ENCODE measurements at regions of chr7 and their contacts with region 1.

Region 1: GRCh38 chr7:49497471-49497870 is 276.0 kb upstream of the VWC2 start:
- DNase-seq: no peak
- ATAC-seq: no peak
- H3K4me3 ChIP-seq: no peak overlapping the region
- H3K27ac ChIP-seq: no peak overlapping the region
- H3K4me1 ChIP-seq: no peaks in the 10 kb centered on the region
- H3K27me3 ChIP-seq: peaks cover 80% of the 10 kb centered on the region
- CTCF ChIP-seq: no peak

Region 2: GRCh38 chr7:49324707-49325106 is 172.8 kb before region 1 on chr7:
- CTCF ChIA-PET with region 1: no interaction called
- POLR2A ChIA-PET with region 1: no interaction called
- intact Hi-C with region 1: loop called (anchors 10 kb)
- DNase-seq: peak; percentile 48
- ATAC-seq: peak; percentile 70
- H3K4me3 ChIP-seq: no peak overlapping the region
- H3K27ac ChIP-seq: no peak overlapping the region
- H3K4me1 ChIP-seq: no peaks in the 10 kb centered on the region
- H3K27me3 ChIP-seq: peaks cover 65% of the 10 kb centered on the region
- CTCF ChIP-seq: peak; percentile 55

Region 3: DNA sequence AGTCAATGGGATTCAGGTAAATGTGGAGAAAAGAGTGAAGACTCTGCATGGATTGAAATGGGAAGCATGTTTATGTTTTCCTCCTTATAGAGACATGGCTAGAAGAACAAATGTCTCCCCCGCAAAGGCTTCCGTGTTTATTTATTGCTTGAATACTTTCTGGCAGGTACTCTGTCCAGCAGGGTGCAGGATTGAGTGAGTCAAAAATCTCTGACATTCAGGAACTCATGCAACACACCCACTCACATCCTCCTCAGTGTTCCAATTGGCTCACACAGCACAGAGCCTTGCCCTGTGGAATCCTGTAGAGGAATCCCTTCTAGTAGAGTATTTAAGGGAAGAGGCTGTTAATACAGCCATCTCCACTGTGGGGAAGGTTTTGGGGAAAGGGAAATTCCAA is 14.3 kb before region 1 on chr7:
- CTCF ChIA-PET with region 1: no interaction called
- POLR2A ChIA-PET with region 1: no interaction called
- intact Hi-C with region 1: no loop called
- DNase-seq: peak; percentile 53
- ATAC-seq: peak; percentile 60
- H3K4me3 ChIP-seq: no peak overlapping the region
- H3K27ac ChIP-seq: no peak overlapping the region
- H3K4me1 ChIP-seq: no peaks in the 10 kb centered on the region
- H3K27me3 ChIP-seq: peaks cover 34% of the 10 kb centered on the region
- CTCF ChIP-seq: peak; percentile 59

Region 4: DNA sequence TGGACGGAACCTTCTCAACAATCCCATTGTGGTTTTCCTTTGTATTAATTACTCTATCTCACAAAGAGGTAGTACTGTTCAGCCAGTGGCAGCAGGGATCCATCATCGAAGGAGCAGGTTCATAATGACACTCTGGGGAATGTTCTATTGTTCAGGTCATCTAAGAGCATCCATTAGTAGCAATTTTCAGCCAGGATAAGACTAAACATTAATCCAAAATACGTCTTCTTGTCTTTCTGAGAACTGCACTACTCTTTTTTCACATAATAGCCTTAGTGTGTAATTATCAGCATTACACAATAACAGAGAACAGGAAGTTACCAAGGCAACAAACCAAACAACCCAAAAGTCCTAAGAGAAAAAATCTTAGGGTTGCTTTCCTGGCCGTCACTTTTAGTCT is 16.4 kb after region 1 on chr7:
- CTCF ChIA-PET with region 1: no interaction called
- POLR2A ChIA-PET with region 1: no interaction called
- intact Hi-C with region 1: no loop called
- DNase-seq: no peak
- ATAC-seq: no peak
- H3K4me3 ChIP-seq: no peak overlapping the region
- H3K27ac ChIP-seq: no peak overlapping the region
- H3K4me1 ChIP-seq: no peaks in the 10 kb centered on the region
- H3K27me3 ChIP-seq: peaks cover 50% of the 10 kb centered on the region
- CTCF ChIP-seq: no peak

Region 5: DNA sequence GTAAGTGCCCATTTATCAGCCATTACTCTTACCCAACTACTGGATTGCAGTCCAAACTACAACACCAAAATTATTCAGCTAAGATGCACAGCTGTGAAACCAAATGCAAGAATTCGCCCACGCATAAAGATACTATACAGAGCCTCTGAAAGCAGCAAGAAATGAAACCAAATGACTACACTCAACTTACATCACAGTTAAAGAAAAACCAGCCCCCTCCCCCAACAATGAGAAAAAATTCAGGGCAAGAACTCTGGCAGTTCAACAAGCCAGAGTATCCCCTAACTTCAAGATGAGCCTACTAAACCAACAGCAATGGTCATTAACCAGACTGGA is 66.9 kb after region 1 on chr7:
- CTCF ChIA-PET with region 1: no interaction called
- POLR2A ChIA-PET with region 1: no interaction called
- intact Hi-C with region 1: no loop called
- DNase-seq: no peak
- ATAC-seq: no peak
- H3K4me3 ChIP-seq: no peak overlapping the region
- H3K27ac ChIP-seq: no peak overlapping the region
- H3K4me1 ChIP-seq: no peaks in the 10 kb centered on the region
- H3K27me3 ChIP-seq: no peaks in the 10 kb centered on the region
- CTCF ChIP-seq: no peak